Esophagus muscularis mucosa (tissue), 4 donors: ENCODE measurements at regions of chr2 and their contacts with region 1.

Region 1: DNA sequence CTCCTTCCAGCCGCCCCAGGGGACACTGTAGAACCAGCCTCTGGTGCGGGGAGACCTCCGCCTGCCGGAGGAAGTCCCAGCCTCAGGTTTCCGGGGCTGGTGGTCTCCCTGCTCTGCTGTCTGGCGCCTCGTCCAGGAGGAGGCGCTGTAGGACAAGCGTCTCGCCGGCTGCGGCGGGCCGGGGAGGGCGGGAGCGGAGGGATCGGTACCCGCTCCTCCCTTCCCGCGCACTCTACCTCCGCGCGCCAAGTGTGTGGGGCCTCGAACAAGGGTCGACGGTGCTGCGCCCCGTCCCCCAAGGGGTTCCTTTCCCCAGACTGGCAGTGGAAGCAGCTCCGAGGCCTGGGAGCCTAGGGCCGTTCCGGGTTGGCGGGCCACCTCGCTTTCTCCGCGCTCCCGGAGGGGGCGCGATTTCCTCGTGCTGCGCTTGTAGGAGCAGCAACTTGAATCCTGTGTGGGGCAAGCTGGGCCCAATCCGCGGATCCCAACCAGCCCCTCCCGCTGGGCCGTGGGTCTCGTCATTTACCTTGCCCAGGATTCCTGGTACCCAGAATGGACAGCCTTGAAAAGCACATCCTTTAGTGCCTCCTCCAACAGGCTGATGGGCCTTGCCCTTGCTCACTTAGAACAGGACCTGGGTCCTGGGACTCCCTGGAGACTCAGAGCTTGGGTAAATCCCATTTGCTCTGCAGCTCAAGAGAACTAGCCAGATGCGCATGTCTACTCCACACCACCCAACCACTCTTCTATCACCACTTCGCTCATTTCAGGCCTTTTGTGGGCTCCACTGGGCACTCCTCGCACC is 10.6 kb upstream of the HOXD4 start:
- DNase-seq: no peak
- H3K4me3 ChIP-seq: peak overlapping the region; percentile 49 to 65 (median 54)
- H3K27ac ChIP-seq: peak overlapping the region in 3 of 4 donors; percentile 22 to 37 (median 35)
- H3K4me1 ChIP-seq: peaks cover 22 to 41% (median 30%) of the 10 kb centered on the region in 4 donors
- H3K27me3 ChIP-seq: peaks cover 14 to 91% (median 51%) of the 10 kb centered on the region in 4 donors
- CTCF ChIP-seq: peak; percentile 75 to 92 (median 87)
- EP300 ChIP-seq: no peak
- POLR2A ChIP-seq: no peak

Region 2: DNA sequence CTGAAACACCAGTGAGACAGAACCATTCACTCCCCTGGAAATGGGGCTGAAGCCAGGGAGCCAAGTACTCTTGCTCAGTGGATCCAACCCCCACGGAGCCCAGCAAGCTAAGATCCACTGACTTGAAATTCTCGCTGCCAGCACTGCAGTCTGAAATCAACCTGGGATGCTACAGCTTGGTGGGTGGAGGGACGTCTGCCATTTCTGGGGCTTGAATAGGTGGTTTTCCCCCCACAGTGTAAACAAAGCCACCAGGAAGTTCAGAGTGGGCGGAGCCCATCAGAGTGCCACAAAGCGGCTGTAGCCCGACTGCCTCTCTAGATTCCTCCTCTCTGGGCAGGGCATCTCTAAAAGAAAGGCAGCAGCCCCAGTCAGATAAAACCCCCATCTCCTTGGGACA is 431.5 kb before region 1 on chr2:
- intact Hi-C with region 1: no loop called
- DNase-seq: no peak
- H3K4me3 ChIP-seq: no peak overlapping the region
- H3K27ac ChIP-seq: no peak overlapping the region
- H3K4me1 ChIP-seq: no peaks in the 10 kb centered on the region
- H3K27me3 ChIP-seq: peaks cover 0 to 25% (median 0%) of the 10 kb centered on the region in 4 donors
- CTCF ChIP-seq: no peak
- EP300 ChIP-seq: no peak
- POLR2A ChIP-seq: no peak

Region 3: GRCh38 chr2:175855794-175856453 is 284.8 kb before region 1 on chr2:
- intact Hi-C with region 1: no loop called
- DNase-seq: peak; percentile 89
- H3K4me3 ChIP-seq: peak overlapping the region in 3 of 4 donors; percentile 23 to 41 (median 24)
- H3K27ac ChIP-seq: peak overlapping the region; percentile 67 to 73 (median 72)
- H3K4me1 ChIP-seq: peaks cover 5 to 19% (median 7%) of the 10 kb centered on the region in 4 donors
- H3K27me3 ChIP-seq: no peaks in the 10 kb centered on the region
- CTCF ChIP-seq: no peak
- EP300 ChIP-seq: no peak
- POLR2A ChIP-seq: no peak

Region 4: GRCh38 chr2:176106581-176107539 is 33.9 kb before region 1 on chr2 and contains the start of gene HOXD11:
- intact Hi-C with region 1: no loop called
- DNase-seq: no peak
- H3K4me3 ChIP-seq: peak within 1 kb of the TSS; percentile 20 to 49 (median 40)
- H3K27ac ChIP-seq: no peak within 1 kb of the TSS
- H3K4me1 ChIP-seq: peaks cover 26 to 61% (median 54%) of the 10 kb centered on the region in 4 donors
- H3K27me3 ChIP-seq: peaks cover 12 to 99% (median 89%) of the 10 kb centered on the region in 4 donors
- CTCF ChIP-seq: no peak
- EP300 ChIP-seq: no peak
- POLR2A ChIP-seq: no peak
- total RNA-seq, gene HOXD11: not detected

Region 5: DNA sequence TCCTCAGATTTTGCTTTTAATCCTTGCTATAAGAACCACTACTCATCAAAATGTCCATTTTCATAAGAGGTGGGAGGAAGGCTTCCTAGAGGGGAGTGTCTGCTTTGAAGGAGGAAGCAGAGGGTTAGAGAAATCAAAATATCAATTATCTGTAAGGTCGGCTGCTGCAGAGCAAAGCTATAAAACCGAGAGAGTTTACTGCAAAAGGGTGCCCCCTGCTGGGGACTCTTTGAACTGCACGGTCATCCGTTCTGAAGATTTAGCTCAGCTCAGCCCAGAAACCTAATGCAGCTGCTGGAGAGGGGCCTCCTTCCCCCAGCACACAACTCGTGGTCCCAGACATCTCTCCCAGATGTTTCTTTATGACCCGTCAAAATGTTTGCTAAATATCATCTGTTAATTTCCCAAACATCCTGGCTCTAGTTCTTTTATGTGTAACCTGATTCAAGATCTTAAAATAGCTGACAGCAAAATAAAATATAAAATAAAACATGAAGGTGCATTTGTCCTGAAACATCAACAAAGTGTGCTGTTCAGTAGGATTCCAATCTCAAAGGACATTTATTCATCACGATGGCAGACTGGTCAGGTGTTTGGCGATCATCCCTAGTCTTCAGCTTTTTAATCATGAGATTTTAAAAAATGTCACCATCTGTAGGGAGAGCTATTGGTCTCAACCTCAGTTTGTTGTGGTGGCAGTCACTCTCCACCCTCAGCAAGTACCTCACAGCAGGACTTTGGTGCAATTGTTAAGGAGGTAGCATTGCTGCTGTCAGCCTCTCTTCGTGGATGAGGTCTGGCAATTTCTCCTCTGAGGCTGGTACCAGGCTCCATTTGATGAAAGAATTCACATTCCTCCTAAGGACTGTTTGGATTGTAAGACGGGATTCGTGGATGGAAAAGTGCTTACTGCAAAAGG is 314.4 kb after region 1 on chr2:
- intact Hi-C with region 1: loop called (anchors 5 kb)
- DNase-seq: peak; percentile 96
- H3K4me3 ChIP-seq: no peak overlapping the region
- H3K27ac ChIP-seq: peak overlapping the region; percentile 35 to 59 (median 46)
- H3K4me1 ChIP-seq: peaks cover 8 to 14% (median 10%) of the 10 kb centered on the region in 4 donors
- H3K27me3 ChIP-seq: peaks cover 0 to 37% (median 0%) of the 10 kb centered on the region in 4 donors
- CTCF ChIP-seq: peak; percentile 76 to 98 (median 96)
- EP300 ChIP-seq: no peak
- POLR2A ChIP-seq: no peak